ENCODE measurements at regions of chr4 and their contacts with region 1.

Region 1: DNA sequence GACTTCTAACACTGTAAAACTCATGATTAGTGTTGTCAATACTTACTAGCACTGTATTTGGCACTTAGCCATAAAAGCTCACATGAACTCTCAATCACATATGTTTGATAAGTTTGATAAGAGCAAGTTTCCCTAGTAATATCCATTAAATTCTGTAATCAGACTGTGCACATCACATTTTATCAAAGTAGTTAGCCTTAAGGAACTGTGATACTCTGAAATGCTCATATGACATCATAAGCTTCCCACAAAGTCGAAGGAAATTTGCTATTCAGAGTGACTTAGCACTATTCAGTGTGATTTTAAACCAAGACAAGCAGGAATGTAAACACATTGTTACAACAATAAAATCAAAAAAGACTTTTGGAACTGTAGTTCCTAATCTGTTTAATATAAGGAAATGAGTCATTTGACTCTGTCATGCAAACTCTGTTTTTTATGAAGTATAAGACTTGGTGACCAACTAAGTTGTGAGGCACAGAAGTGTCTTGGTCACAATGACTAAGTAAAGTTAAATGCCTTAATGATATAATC is 6.7 kb downstream of the SLC7A11 start:
- DNase-seq: no peak
- H3K4me3 Mint-ChIP-seq: peak overlapping the region; percentile 41
- H3K27ac Mint-ChIP-seq: peak overlapping the region; percentile 92
- H3K4me1 Mint-ChIP-seq: peaks cover 10% of the 10 kb centered on the region
- H3K27me3 Mint-ChIP-seq: no peaks in the 10 kb centered on the region
- CTCF ChIP-seq: no peak

Region 2: GRCh38 chr4:137961051-137961438 is 274.4 kb before region 1 on chr4:
- CTCF ChIA-PET with region 1: no interaction called
- intact Hi-C with region 1: no loop called
- DNase-seq: no peak
- H3K4me3 Mint-ChIP-seq: no peak overlapping the region
- H3K27ac Mint-ChIP-seq: no peak overlapping the region
- H3K4me1 Mint-ChIP-seq: no peaks in the 10 kb centered on the region
- H3K27me3 Mint-ChIP-seq: no peaks in the 10 kb centered on the region
- CTCF ChIP-seq: no peak

Region 3: GRCh38 chr4:138297743-138298405 is 62.4 kb after region 1 on chr4:
- CTCF ChIA-PET with region 1: no interaction called
- intact Hi-C with region 1: no loop called
- DNase-seq: no peak
- H3K4me3 Mint-ChIP-seq: no peak overlapping the region
- H3K27ac Mint-ChIP-seq: no peak overlapping the region
- H3K4me1 Mint-ChIP-seq: no peaks in the 10 kb centered on the region
- H3K27me3 Mint-ChIP-seq: no peaks in the 10 kb centered on the region
- CTCF ChIP-seq: no peak

Region 4: DNA sequence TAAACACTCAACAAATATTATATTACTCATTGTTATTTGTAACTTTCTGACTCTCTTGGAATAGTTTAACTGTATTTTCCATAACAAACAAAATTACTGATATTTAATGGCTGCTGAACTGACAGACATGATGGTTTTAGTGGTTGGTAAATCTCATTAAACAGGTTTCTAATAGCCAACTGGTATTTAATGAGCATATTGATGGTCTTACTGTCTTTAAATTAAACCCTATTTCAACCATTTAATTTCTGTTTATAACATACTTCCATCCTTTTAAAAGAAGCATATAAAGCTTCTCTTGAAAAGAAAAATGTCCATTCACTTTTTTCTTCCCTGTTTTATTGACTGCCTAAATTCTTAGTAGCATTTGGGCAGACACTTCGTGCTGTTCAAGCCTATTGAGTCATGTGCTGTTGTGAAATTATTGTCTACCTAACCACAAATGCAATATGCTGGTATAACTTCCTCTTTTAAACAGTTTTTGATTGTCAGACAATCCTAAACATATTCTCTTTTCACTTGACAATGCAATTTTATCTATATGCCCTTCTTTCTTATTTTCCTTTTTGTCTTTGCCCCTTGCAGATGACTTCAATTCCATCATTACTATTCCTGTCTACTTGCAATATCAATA is 170.6 kb after region 1 on chr4:
- CTCF ChIA-PET with region 1: no interaction called
- intact Hi-C with region 1: loop called (anchors 5 kb)
- DNase-seq: no peak
- H3K4me3 Mint-ChIP-seq: no peak overlapping the region
- H3K27ac Mint-ChIP-seq: peak overlapping the region; percentile 68
- H3K4me1 Mint-ChIP-seq: peaks cover 21% of the 10 kb centered on the region
- H3K27me3 Mint-ChIP-seq: no peaks in the 10 kb centered on the region
- CTCF ChIP-seq: no peak